Activated CD4-positive, alpha-beta T cell treated with anti-CD3 and anti-CD28 coated beads for 36 hours (primary cell): ENCODE measurements at regions of chr22 and their contacts with region 1.

Region 1: DNA sequence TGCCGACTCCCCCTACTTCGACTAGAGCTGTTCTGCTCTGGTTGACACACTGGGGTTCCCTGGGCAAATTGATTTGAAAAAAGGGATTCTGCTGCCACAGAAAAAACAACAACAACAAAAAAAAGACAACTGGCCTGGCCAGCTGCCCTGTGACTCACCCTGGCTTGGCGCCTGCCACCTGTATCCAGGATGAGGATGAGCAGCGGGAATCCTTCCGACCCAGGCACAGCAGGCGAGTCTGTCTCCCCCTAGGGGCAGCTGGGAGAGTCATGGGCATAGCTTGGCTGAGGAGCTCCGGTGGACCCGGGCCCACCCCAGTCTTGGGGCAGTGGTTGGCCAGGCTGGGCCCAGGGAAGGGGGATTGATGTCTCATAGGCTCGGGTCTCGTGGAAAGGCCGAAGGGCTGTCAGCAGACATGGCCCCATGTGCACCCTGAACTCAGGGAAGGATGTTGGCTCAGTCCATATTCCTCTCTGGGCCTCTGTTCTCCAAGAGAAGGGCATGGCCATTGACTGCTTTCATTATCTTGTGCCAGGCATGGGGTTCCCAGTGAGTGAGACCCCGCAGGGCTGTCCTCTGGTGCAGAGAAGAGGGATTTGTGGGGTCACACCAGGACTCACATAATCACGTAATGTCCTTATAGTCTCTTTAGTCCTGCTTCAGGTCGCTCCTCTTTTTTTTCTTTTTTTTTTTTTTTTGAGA is 10.4 kb upstream of the SUN2 start:
- DNase-seq: peak; percentile 60
- ATAC-seq: peak; percentile 38
- H3K4me3 Mint-ChIP-seq: no peak overlapping the region
- H3K27ac Mint-ChIP-seq: no peak overlapping the region
- H3K4me1 Mint-ChIP-seq: peaks cover 4% of the 10 kb centered on the region
- H3K27me3 Mint-ChIP-seq: no peaks in the 10 kb centered on the region

Region 2: GRCh38 chr22:38745676-38746460 is 20.4 kb before region 1 on chr22:
- CTCF ChIA-PET with region 1: interaction called, 12 read pairs
- POLR2A ChIA-PET with region 1: no interaction called
- intact Hi-C with region 1: no loop called
- DNase-seq: no peak
- ATAC-seq: no peak
- H3K4me3 Mint-ChIP-seq: no peak overlapping the region
- H3K27ac Mint-ChIP-seq: peak overlapping the region; percentile 51
- H3K4me1 Mint-ChIP-seq: peaks cover 24% of the 10 kb centered on the region
- H3K27me3 Mint-ChIP-seq: no peaks in the 10 kb centered on the region

Region 3: DNA sequence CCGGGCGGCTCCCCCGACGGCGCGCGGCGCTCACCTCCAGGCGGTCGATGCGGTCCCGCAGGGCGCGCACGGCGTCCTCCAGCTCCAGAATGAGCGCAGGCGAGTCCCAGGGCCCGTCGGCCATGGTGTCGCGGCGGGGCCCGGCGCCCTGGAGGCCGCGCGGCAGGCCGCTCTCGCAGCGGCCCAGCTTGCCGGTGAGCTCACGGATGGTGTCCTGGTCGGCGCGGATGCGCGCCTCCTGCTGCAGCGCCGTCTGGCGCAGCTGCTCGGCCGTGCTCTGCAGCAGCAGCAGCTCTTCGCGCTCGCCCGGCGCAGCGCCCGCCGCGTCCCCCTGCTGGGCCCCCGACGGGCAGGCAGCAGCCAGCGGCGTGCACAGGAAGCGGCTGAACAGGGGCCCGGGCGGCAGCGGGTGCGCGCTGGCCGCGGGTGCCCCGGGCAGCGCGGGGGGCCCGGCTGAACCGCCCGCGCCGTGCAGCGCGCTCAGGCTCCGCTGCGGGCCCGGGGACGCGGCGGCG is 77.0 kb after region 1 on chr22:
- CTCF ChIA-PET with region 1: interaction called, 10 read pairs
- POLR2A ChIA-PET with region 1: no interaction called
- intact Hi-C with region 1: loop called in 1 of 2 experiments (anchors 1 kb)
- DNase-seq: peak; percentile 79
- ATAC-seq: peak; percentile 92
- H3K4me3 Mint-ChIP-seq: peak overlapping the region; percentile 68
- H3K27ac Mint-ChIP-seq: no peak overlapping the region
- H3K4me1 Mint-ChIP-seq: peaks cover 17% of the 10 kb centered on the region
- H3K27me3 Mint-ChIP-seq: peaks cover 18% of the 10 kb centered on the region

Region 4: GRCh38 chr22:39117585-39118191 is 351.5 kb after region 1 on chr22:
- CTCF ChIA-PET with region 1: no interaction called
- POLR2A ChIA-PET with region 1: no interaction called
- intact Hi-C with region 1: no loop called
- DNase-seq: peak; percentile 84
- ATAC-seq: peak; percentile 60
- H3K4me3 Mint-ChIP-seq: peak overlapping the region; percentile 10
- H3K27ac Mint-ChIP-seq: peak overlapping the region; percentile 86
- H3K4me1 Mint-ChIP-seq: peaks cover 54% of the 10 kb centered on the region
- H3K27me3 Mint-ChIP-seq: no peaks in the 10 kb centered on the region